Activated CD4-positive, alpha-beta T cell treated with anti-CD3 and anti-CD28 coated beads, Interleukin-2, amount 10 ng/mL, durations not matched to agents 24 days and 14 days (primary cell): ENCODE measurements at regions of chr14 and their contacts with region 1.

Region 1: GRCh38 chr14:34498684-34499412 is 36.8 kb upstream of the SPTSSA start:
- DNase-seq: peak; percentile 69
- H3K4me3 Mint-ChIP-seq: no peak overlapping the region
- H3K27ac Mint-ChIP-seq: no peak overlapping the region
- H3K4me1 Mint-ChIP-seq: no peaks in the 10 kb centered on the region
- H3K27me3 Mint-ChIP-seq: peaks cover 1% of the 10 kb centered on the region

Region 2: DNA sequence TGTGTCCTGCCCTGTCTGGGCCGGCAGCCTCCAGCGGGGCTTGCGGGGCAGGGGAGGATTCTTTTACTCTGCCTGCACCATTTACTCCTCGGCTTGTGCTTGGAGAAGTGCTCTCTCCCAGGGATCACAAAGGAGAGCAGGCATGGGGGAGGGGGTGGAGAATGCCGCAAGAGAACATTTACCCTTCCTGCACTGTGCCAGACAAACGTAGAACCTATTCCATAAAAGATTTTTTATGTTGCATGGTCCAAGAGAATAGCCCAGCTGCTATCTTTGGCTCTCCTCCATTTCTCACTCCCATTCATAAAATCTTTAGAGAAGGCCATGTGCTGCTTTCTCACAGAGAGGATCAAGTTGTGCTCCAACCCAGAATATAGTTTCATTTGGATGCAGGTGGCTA is 196.2 kb before region 1 on chr14:
- intact Hi-C with region 1: no loop called
- DNase-seq: no peak
- H3K4me3 Mint-ChIP-seq: no peak overlapping the region
- H3K27ac Mint-ChIP-seq: no peak overlapping the region
- H3K4me1 Mint-ChIP-seq: no peaks in the 10 kb centered on the region
- H3K27me3 Mint-ChIP-seq: peaks cover 4% of the 10 kb centered on the region

Region 3: DNA sequence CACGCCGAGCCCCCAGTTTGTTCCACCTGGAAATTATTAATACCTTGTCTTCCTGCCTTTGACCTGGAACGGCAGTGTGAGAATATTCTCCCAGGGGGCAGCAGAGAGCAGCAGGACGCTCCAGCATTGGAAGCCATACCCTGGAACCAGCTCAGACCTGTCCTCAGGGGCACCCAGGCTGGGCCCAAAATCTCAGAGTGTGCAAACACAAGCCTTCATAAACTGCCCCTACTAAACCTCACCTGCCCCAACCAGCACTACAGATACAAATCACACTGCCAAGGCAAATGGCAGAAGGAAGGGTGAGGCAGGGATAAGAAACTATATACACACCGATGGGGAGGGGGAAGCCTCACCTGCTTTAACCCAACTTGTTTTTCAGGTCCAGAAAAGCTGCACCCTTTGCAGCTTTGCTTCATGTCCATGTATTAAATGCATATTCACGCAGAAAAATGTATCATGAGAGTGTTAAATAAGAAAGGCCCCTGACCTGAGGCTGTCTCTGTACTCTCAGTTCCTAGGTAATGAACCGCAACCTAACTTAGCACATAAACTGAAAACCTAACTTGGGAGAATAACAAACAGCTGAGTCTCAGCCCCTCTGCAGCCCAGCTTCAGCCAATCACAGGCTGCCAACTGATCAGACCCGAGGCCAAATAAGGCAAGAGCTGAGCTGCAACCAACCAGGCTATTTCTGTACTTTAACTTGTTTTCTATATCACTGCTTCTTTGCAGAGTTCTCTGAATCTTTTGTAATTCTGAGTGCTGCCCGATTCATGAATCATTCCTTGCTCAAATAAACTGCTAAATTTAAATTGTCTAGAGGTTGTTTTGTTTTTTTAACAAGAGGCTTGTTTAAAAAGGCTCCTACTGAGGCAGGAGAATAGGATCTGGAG is 166.9 kb before region 1 on chr14:
- intact Hi-C with region 1: loop called (anchors 1 kb)
- DNase-seq: peak; percentile 88
- H3K4me3 Mint-ChIP-seq: no peak overlapping the region
- H3K27ac Mint-ChIP-seq: no peak overlapping the region
- H3K4me1 Mint-ChIP-seq: peaks cover 2% of the 10 kb centered on the region
- H3K27me3 Mint-ChIP-seq: peaks cover 2% of the 10 kb centered on the region